ENCODE measurements at regions of chr13 and their contacts with region 1.

Region 1: DNA sequence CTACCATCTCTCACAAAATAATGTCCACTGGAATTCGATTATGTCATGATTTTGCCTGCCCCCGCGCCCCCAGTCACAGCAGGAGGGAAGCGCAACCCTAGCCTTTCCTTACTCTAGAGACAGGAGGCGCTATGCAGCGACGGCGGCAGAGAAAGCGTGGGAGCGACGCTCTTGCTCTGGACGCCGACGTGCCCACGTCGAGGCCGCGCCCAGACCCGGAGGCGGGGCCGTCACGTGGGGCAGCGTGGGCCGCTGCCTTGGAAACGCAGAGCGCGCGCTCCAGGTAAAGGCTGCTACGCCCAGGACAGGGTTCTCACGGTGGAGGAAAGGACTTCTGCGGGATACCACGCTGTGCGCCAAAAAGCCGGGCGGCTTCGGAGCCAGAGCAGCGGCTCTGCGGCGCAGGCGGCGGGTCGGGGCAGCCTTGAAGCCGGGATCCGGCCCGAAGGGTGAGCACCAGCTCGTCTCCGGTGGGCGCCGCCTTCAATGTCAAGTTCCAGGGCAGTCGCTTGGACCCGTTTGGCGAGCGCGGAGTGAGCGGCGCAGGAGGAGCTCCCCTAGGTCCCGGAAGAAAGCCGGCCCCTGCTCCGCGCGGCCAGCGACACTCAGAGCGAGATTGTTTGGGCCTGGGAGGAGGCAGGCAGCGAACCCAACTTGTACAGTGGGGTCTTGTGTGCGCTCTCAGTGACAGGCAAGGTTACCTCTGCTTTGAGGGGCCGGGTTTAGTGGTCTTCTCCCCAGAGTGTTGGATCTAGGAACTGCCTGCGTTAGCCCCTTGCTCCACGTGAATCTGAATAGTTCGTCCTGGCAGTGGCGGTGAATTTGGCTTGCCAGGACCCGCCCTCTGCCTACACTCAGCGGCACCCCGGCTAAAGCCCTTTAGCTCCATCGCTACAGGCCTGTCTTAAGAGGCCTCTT is 121.7 kb downstream of the MRPL57 start:
- DNase-seq: peak; percentile 73 to 91
- H3K4me3 ChIP-seq: peak overlapping the region; percentile 48 to 98 (median 92)
- H3K27ac ChIP-seq: peak overlapping the region; percentile 52; the same call in 1 of the 2 replicates
- H3K4me1 ChIP-seq: peaks cover 0 to 2% (median 0%) of the 10 kb centered on the region in 4 experiments; a peak in 3 of 7 replicates
- H3K27me3 ChIP-seq: no peaks in the 10 kb centered on the region
- CTCF ChIP-seq: peak; percentile 82 to 87 (median 83)
- EP300 ChIP-seq: no peak; a peak in 1 of 3 replicates
- POLR2A ChIP-seq: peak in 1 of 2 experiments; percentile 54; a peak in 1 of 3 replicates
- RAD21 ChIP-seq: peak; percentile 29 to 54

Region 2: GRCh38 chr13:21310221-21310620 is 12.0 kb after region 1 on chr13:
- CTCF ChIA-PET with region 1: interaction called, 24 read pairs
- POLR2A ChIA-PET with region 1: interaction called, 7 read pairs
- DNase-seq: no peak
- H3K4me3 ChIP-seq: no peak overlapping the region
- H3K27ac ChIP-seq: no peak overlapping the region
- H3K4me1 ChIP-seq: peaks cover 2 to 5% (median 3%) of the 10 kb centered on the region in 4 experiments; a peak in 4 of 7 replicates
- H3K27me3 ChIP-seq: no peaks in the 10 kb centered on the region
- CTCF ChIP-seq: no peak
- EP300 ChIP-seq: no peak
- POLR2A ChIP-seq: no peak
- RAD21 ChIP-seq: no peak

Region 3: GRCh38 chr13:21359855-21360254 is 61.7 kb after region 1 on chr13:
- CTCF ChIA-PET with region 1: interaction called, 10 read pairs
- POLR2A ChIA-PET with region 1: no interaction called
- DNase-seq: peak in 1 of 2 experiments; percentile 39
- H3K4me3 ChIP-seq: no peak overlapping the region
- H3K27ac ChIP-seq: no peak overlapping the region
- H3K4me1 ChIP-seq: peaks cover 0 to 2% (median 0%) of the 10 kb centered on the region in 4 experiments; a peak in 1 of 7 replicates
- H3K27me3 ChIP-seq: no peaks in the 10 kb centered on the region
- CTCF ChIP-seq: no peak
- EP300 ChIP-seq: no peak
- POLR2A ChIP-seq: no peak
- RAD21 ChIP-seq: no peak

Region 4: GRCh38 chr13:21458813-21459701 is 160.9 kb after region 1 on chr13 and contains the start of gene ZDHHC20:
- CTCF ChIA-PET with region 1: interaction called, 10 read pairs
- POLR2A ChIA-PET with region 1: interaction called, 3 read pairs
- DNase-seq: peak; percentile 46 to 98
- H3K4me3 ChIP-seq: peak within 1 kb of the TSS; percentile 87 to 99 (median 97)
- H3K27ac ChIP-seq: peak within 1 kb of the TSS; percentile 94
- H3K4me1 ChIP-seq: peaks cover 0 to 12% (median 6%) of the 10 kb centered on the region in 4 experiments; a peak in 4 of 7 replicates
- H3K27me3 ChIP-seq: no peaks in the 10 kb centered on the region
- CTCF ChIP-seq: no peak
- EP300 ChIP-seq: no peak
- POLR2A ChIP-seq: peak; percentile 38 to 60; a peak in 2 of 3 replicates
- RAD21 ChIP-seq: no peak
- total RNA-seq, gene ZDHHC20: 80.7 and 89.0 TPM in 2 replicates

Measured in H1 (cell line).